ENCODE measurements at regions of chr1 and their contacts with region 1.

Region 1: DNA sequence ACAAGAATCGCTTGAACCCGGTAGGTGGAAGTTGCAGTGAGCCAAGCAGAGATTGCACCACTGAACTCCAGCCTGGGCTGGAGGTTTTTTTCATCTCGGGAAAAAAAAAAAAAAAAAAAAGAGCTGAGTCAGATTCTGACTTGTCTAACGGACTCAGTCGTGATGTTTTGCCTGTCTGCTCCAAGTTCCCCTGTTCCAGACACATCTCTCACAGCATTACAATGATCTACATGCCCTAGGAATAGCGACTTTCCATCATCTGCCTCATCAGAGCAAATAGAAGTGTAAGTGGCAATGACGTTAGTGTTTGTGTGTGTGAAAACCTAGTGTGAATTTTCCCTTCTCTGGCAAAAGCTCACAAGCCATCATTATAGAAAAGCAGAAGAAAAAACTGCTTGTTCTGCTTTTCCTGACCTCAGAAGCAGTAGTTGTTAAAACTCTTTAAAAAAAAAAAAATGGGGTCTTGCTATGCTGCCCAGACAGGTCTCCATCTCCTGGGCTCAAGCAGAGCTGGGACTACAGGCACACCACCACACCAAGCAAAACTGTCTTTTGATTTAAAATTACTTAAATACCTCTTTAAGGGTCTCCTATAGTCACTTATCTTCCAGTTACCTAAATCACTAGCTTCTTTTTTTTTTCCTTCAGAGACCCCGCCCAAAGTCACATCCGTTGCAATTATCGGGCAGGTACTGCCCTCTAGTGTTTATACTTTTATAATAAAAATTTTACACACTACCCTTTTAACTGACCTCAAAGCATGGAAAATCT is 37.3 kb downstream of the PLEKHO1 start:
- DNase-seq: peak; percentile 74
- H3K4me3 Mint-ChIP-seq: no peak overlapping the region
- H3K27ac Mint-ChIP-seq: no peak overlapping the region
- H3K4me1 Mint-ChIP-seq: peaks cover 9% of the 10 kb centered on the region
- H3K27me3 Mint-ChIP-seq: no peaks in the 10 kb centered on the region
- CTCF ChIP-seq: peak; percentile 67

Region 2: DNA sequence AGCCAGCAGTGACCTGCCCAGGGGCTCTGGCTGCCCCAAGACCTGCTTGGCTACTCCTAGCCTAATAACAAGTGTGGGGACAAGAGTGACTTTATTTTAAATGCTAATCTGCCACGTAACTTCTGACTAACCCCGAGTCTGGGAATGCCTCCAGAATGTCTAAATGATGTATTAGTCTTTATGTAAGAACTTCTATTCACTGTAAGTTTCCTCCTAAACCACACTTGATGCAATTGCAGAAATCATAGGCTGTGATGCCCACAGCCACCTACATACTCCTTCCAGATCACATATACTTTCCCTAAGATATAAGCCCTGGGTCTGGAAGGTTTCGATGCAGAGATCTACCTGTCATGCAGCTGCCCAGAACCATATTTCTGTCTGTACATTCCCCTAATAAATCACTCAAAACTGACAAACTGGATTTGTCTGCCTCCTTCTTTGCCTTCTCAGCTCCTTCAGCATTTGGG is 125.3 kb before region 1 on chr1:
- CTCF ChIA-PET with region 1: interaction called, 36 read pairs
- POLR2A ChIA-PET with region 1: interaction called, 43 read pairs
- intact Hi-C with region 1: no loop called
- DNase-seq: peak; percentile 80
- H3K4me3 Mint-ChIP-seq: no peak overlapping the region
- H3K27ac Mint-ChIP-seq: peak overlapping the region; percentile 70
- H3K4me1 Mint-ChIP-seq: peaks cover 24% of the 10 kb centered on the region
- H3K27me3 Mint-ChIP-seq: no peaks in the 10 kb centered on the region
- CTCF ChIP-seq: no peak

Region 3: GRCh38 chr1:150102986-150103385 is 84.0 kb before region 1 on chr1:
- CTCF ChIA-PET with region 1: interaction called, 20 read pairs
- POLR2A ChIA-PET with region 1: no interaction called
- intact Hi-C with region 1: no loop called
- DNase-seq: no peak
- H3K4me3 Mint-ChIP-seq: no peak overlapping the region
- H3K27ac Mint-ChIP-seq: no peak overlapping the region
- H3K4me1 Mint-ChIP-seq: no peaks in the 10 kb centered on the region
- H3K27me3 Mint-ChIP-seq: no peaks in the 10 kb centered on the region
- CTCF ChIP-seq: no peak

Region 4: DNA sequence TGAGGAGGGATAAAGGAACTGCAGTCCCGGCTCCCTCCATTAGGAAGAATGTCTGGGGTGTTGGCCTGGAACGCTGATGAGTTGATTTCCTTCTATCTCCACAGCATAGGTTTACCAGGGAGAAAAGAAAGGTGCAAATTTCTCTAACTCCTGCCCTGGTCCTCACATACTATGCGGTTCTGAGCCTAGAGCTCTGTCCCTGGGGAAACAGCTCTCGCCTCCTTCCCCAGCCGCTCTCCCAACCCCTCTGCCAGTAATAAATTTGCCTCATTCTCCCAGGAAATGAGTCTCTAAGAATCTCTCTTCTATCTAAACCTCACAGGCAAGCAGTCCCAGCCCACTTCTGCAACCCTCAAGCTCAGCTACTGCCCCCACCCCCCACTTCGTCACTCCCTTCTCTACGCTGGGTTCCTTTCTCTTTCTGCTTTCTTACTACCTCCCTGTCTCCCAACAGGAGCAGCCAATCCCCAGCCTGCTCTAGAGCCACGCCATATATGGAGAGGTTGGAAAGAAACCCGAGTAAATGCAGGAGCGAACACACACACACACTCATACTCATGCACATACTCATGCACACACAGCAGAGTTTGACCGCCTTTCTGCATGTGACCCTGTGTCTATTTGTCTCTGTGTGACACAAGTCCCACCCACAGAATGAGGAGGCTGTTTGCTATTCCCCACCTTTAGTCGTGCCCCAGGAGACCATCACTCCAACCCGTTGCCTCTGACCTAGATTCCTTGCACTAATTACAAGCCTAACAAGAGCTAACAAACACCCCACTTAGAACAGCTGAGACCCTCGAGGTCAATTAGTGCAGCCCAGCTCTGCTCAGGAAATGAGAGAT is 23.9 kb before region 1 on chr1:
- CTCF ChIA-PET with region 1: interaction called, 223 read pairs
- POLR2A ChIA-PET with region 1: interaction called, 4 read pairs
- intact Hi-C with region 1: no loop called
- DNase-seq: peak; percentile 97
- H3K4me3 Mint-ChIP-seq: peak overlapping the region; percentile 69
- H3K27ac Mint-ChIP-seq: peak overlapping the region; percentile 84
- H3K4me1 Mint-ChIP-seq: peaks cover 14% of the 10 kb centered on the region
- H3K27me3 Mint-ChIP-seq: no peaks in the 10 kb centered on the region
- CTCF ChIP-seq: peak; percentile 25

Region 5: GRCh38 chr1:150213170-150214098 is 26.5 kb after region 1 on chr1:
- CTCF ChIA-PET with region 1: interaction called, 12 read pairs
- POLR2A ChIA-PET with region 1: interaction called, 3 read pairs
- intact Hi-C with region 1: no loop called
- DNase-seq: peak; percentile 95
- H3K4me3 Mint-ChIP-seq: peak overlapping the region; percentile 77
- H3K27ac Mint-ChIP-seq: peak overlapping the region; percentile 91
- H3K4me1 Mint-ChIP-seq: peaks cover 12% of the 10 kb centered on the region
- H3K27me3 Mint-ChIP-seq: no peaks in the 10 kb centered on the region
- CTCF ChIP-seq: peak; percentile 19

Region 6: GRCh38 chr1:150243003-150243402 is 56.0 kb after region 1 on chr1:
- CTCF ChIA-PET with region 1: no interaction called
- POLR2A ChIA-PET with region 1: no interaction called
- intact Hi-C with region 1: no loop called
- DNase-seq: no peak
- H3K4me3 Mint-ChIP-seq: no peak overlapping the region
- H3K27ac Mint-ChIP-seq: no peak overlapping the region
- H3K4me1 Mint-ChIP-seq: no peaks in the 10 kb centered on the region
- H3K27me3 Mint-ChIP-seq: no peaks in the 10 kb centered on the region
- CTCF ChIP-seq: no peak

Region 7: GRCh38 chr1:150515328-150516048 is 328.5 kb after region 1 on chr1 and contains the start of gene FALEC:
- CTCF ChIA-PET with region 1: no interaction called
- POLR2A ChIA-PET with region 1: no interaction called
- intact Hi-C with region 1: no loop called
- DNase-seq: peak; percentile 98
- H3K4me3 Mint-ChIP-seq: peak within 1 kb of the TSS; percentile 69
- H3K27ac Mint-ChIP-seq: peak within 1 kb of the TSS; percentile 36
- H3K4me1 Mint-ChIP-seq: peaks cover 10% of the 10 kb centered on the region
- H3K27me3 Mint-ChIP-seq: no peaks in the 10 kb centered on the region
- CTCF ChIP-seq: no peak
- total RNA-seq, gene FALEC: not detected in 2 replicates

Measured in MCF 10A (cell line).